ENCODE measurements at regions of chr22 and their contacts with region 1.

Region 1: GRCh38 chr22:45553351-45554039 is 50.8 kb downstream of the FBLN1 start:
- DNase-seq: peak; percentile 81
- ATAC-seq: peak; percentile 55
- H3K4me3 Mint-ChIP-seq: no peak overlapping the region
- H3K27ac Mint-ChIP-seq: no peak overlapping the region
- H3K4me1 Mint-ChIP-seq: no peaks in the 10 kb centered on the region
- H3K27me3 Mint-ChIP-seq: peaks cover 7% of the 10 kb centered on the region

Region 2: GRCh38 chr22:45101515-45102227 is 451.8 kb before region 1 on chr22:
- CTCF ChIA-PET with region 1: no interaction called
- POLR2A ChIA-PET with region 1: no interaction called
- intact Hi-C with region 1: loop called in 1 of 2 experiments (anchors 10 kb)
- DNase-seq: peak; percentile 71
- ATAC-seq: peak; percentile 85
- H3K4me3 Mint-ChIP-seq: no peak overlapping the region
- H3K27ac Mint-ChIP-seq: no peak overlapping the region
- H3K4me1 Mint-ChIP-seq: peaks cover 5% of the 10 kb centered on the region
- H3K27me3 Mint-ChIP-seq: peaks cover 36% of the 10 kb centered on the region

Region 3: DNA sequence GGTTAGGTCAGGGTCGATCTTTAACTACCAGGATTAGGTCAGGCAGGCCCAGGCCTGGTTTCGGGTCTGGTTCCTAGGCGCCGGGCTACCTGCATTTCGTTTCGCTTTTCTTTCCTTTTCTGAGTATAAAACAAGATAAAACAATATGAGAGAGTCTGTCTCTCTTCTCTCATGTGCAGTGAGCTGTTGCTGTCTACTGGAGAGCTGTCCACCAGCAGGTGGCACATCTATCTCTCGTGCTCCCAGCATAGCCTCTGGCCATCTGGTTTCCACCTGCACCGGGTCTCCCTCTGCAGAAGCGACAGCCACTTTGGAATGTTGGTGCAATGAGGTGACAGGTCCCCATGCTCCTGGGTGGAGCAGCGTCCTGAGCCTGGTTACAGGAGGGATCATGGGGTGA is 112.4 kb before region 1 on chr22:
- CTCF ChIA-PET with region 1: interaction called, 3 read pairs
- POLR2A ChIA-PET with region 1: no interaction called
- intact Hi-C with region 1: loop called (anchors 1 to 5 kb)
- DNase-seq: peak; percentile 57
- ATAC-seq: peak; percentile 80
- H3K4me3 Mint-ChIP-seq: no peak overlapping the region
- H3K27ac Mint-ChIP-seq: no peak overlapping the region
- H3K4me1 Mint-ChIP-seq: peaks cover 11% of the 10 kb centered on the region
- H3K27me3 Mint-ChIP-seq: peaks cover 1% of the 10 kb centered on the region

Region 4: DNA sequence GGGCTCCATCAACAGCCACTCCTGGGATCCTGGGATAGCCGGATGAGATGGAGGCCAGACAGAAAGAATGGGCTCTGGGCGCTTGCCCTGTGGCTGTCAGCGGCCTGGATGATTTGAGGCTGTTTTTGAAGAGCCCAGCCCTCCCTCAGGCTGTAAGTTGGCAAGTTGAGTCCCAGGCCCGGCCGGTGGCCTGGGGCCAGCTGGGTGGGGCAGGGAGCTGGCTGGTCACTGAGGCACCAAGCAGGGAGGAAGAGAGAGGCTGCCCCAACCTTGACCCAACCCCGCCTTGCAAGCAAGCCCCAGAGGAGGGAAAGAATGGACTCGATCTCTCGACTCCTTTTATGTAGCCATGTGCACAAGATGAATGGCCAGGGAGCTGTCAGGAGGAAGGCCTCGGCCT is 105.1 kb before region 1 on chr22:
- CTCF ChIA-PET with region 1: no interaction called
- POLR2A ChIA-PET with region 1: no interaction called
- intact Hi-C with region 1: loop called in 1 of 2 experiments (anchors 5 kb)
- DNase-seq: no peak
- ATAC-seq: no peak
- H3K4me3 Mint-ChIP-seq: no peak overlapping the region
- H3K27ac Mint-ChIP-seq: no peak overlapping the region
- H3K4me1 Mint-ChIP-seq: no peaks in the 10 kb centered on the region
- H3K27me3 Mint-ChIP-seq: no peaks in the 10 kb centered on the region

Region 5: DNA sequence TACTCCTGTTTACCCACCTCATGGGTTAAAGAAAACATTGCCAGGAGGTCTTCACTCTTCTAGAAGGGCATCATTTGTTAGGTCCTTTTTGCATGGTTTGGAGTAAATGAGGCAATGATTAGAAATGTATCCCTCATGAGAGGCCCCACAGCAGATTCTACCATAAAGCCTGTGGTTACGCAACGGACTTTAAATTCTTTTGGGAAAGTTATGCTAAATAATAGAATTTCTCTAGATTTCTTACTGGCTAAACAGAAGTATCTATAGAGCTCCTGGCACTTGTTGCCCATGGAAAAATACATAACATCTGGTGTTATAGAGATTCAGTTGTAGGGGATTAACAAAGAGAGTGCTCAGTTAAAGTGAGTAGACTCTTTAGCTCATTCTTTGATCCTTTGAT is 103.1 kb after region 1 on chr22:
- CTCF ChIA-PET with region 1: no interaction called
- POLR2A ChIA-PET with region 1: no interaction called
- intact Hi-C with region 1: no loop called
- DNase-seq: no peak
- ATAC-seq: no peak
- H3K4me3 Mint-ChIP-seq: no peak overlapping the region
- H3K27ac Mint-ChIP-seq: no peak overlapping the region
- H3K4me1 Mint-ChIP-seq: no peaks in the 10 kb centered on the region
- H3K27me3 Mint-ChIP-seq: peaks cover 1% of the 10 kb centered on the region

Measured in activated CD4-positive, alpha-beta T cell treated with anti-CD3 and anti-CD28 coated beads for 36 hours (primary cell).